Naive thymus-derived CD4-positive, alpha-beta T cell (primary cell): ENCODE measurements at regions of chr2 and their contacts with region 1.

Region 1: GRCh38 chr2:202718614-202719013 is 83.8 kb downstream of the FAM117B start:
- DNase-seq: no peak
- ATAC-seq: no peak
- H3K4me3 ChIP-seq: no peak overlapping the region
- H3K4me3 Mint-ChIP-seq: peak overlapping the region in 6 of 10 donors; percentile 2 to 39 (median 36)
- H3K27ac ChIP-seq: no peak overlapping the region
- H3K27ac Mint-ChIP-seq: peak overlapping the region in 6 of 9 donors; percentile 2 to 72 (median 24)
- H3K4me1 ChIP-seq: peaks cover 0 to 16% of the 10 kb centered on the region in 2 donors
- H3K4me1 Mint-ChIP-seq: peaks cover 0 to 74% (median 63%) of the 10 kb centered on the region in 7 donors
- H3K27me3 ChIP-seq: no peaks in the 10 kb centered on the region
- H3K27me3 Mint-ChIP-seq: no peaks in the 10 kb centered on the region

Region 2: DNA sequence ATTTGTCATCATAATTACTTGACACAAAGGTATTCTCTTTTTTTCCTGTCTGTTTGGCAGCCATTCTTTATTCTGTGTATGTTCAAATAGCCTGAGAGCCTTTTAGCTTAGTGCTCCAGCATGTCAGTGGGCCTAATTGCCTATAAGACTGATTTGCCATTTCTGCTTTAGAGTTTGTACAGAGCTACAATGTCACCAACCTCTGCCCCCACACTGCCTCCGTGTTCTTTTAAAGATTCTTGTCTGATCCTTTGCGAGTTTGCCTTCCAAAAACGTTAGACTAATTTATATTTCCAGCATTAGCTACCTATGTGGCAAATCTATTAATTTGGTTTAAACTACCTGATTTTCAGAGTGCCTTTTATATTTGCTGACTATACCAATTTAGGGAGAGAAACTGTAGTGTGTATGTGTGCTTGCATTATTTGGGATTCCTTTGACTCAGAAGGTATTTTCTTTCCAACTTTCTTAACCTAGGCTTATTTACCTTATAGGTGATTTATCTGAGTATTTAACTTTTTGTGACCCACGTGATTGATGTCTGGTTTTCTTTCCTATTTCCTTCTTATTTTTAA is 13.1 kb before region 1 on chr2:
- CTCF ChIA-PET with region 1: no interaction called
- POLR2A ChIA-PET with region 1: interaction called, 3 read pairs
- intact Hi-C with region 1: loop called in 1 of 2 experiments (anchors 2 kb)
- DNase-seq: no peak
- ATAC-seq: no peak
- H3K4me3 ChIP-seq: no peak overlapping the region
- H3K4me3 Mint-ChIP-seq: peak overlapping the region; percentile 1 to 75 (median 44)
- H3K27ac ChIP-seq: no peak overlapping the region
- H3K27ac Mint-ChIP-seq: peak overlapping the region; percentile 46 to 74 (median 70)
- H3K4me1 ChIP-seq: peaks cover 0 to 14% of the 10 kb centered on the region in 2 donors
- H3K4me1 Mint-ChIP-seq: peaks cover 29 to 81% (median 75%) of the 10 kb centered on the region in 7 donors
- H3K27me3 ChIP-seq: no peaks in the 10 kb centered on the region
- H3K27me3 Mint-ChIP-seq: no peaks in the 10 kb centered on the region

Region 3: GRCh38 chr2:202750763-202751427 is 32.3 kb after region 1 on chr2:
- CTCF ChIA-PET with region 1: no interaction called
- POLR2A ChIA-PET with region 1: no interaction called
- intact Hi-C with region 1: loop called in 1 of 2 experiments (anchors 5 kb)
- DNase-seq: peak in 5 of 9 donors; percentile 14 to 40 (median 22)
- ATAC-seq: no peak
- H3K4me3 ChIP-seq: no peak overlapping the region
- H3K4me3 Mint-ChIP-seq: peak overlapping the region in 9 of 10 donors; percentile 18 to 80 (median 67)
- H3K27ac ChIP-seq: peak overlapping the region; percentile 52
- H3K27ac Mint-ChIP-seq: peak overlapping the region in 8 of 9 donors; percentile 18 to 97 (median 88)
- H3K4me1 ChIP-seq: peaks cover 0 to 17% of the 10 kb centered on the region in 2 donors
- H3K4me1 Mint-ChIP-seq: peaks cover 8 to 90% (median 80%) of the 10 kb centered on the region in 7 donors
- H3K27me3 ChIP-seq: no peaks in the 10 kb centered on the region
- H3K27me3 Mint-ChIP-seq: no peaks in the 10 kb centered on the region